Activated CD4-positive, alpha-beta T cell treated with anti-CD3 and anti-CD28 coated beads for 36 hours (primary cell): ENCODE measurements at regions of chr14 and their contacts with region 1.

Region 1: GRCh38 chr14:59189786-59190771 is 1.6 kb downstream of the DAAM1 start:
- DNase-seq: peak; percentile 88
- ATAC-seq: peak; percentile 9
- H3K4me3 Mint-ChIP-seq: peak overlapping the region; percentile 93
- H3K27ac Mint-ChIP-seq: peak overlapping the region; percentile 63
- H3K4me1 Mint-ChIP-seq: peaks cover 13% of the 10 kb centered on the region
- H3K27me3 Mint-ChIP-seq: peaks cover 6% of the 10 kb centered on the region

Region 2: GRCh38 chr14:58571769-58572472 is 618.2 kb before region 1 on chr14:
- CTCF ChIA-PET with region 1: no interaction called
- POLR2A ChIA-PET with region 1: no interaction called
- intact Hi-C with region 1: loop called in 1 of 2 experiments (anchors 5 kb)
- DNase-seq: peak; percentile 83
- ATAC-seq: peak; percentile 90
- H3K4me3 Mint-ChIP-seq: peak overlapping the region; percentile 45
- H3K27ac Mint-ChIP-seq: peak overlapping the region; percentile 93
- H3K4me1 Mint-ChIP-seq: peaks cover 44% of the 10 kb centered on the region
- H3K27me3 Mint-ChIP-seq: no peaks in the 10 kb centered on the region

Region 3: DNA sequence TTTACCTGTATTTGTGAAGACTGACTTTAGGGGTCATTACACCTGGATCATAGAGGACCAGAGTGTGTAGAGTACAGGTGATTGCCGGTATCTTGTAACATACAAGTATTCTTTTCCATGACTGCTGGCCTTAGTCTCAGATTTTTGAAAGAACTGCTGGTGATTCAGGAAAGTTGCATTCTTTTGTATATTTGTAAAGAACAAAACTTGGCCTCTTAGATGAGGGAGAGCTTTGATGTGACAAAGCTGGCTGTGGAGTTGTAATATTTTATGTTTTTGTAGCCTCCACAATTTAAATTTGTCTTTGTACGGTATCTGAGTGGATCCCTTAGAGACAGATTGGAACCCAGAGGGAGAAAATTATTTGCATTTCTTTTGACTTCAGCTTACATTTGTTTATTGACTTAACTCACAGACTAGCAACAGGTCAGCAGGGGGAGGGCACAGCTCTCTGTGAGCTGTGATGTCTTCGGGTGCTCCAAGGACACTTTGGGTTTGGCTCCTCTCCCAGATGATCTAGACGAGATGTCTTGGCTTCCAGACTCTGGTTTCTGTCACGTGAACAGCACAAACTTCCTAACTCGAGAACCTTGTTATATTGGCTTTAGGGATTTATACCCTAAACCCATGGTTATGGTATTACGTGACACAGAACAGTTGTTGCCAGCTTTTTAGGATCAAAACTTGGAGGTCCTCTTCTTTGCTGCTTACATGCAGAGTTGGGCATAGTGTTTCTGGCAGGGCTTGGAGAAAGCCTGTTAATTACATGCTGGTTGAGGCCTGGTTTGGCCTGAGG is 64.3 kb after region 1 on chr14:
- CTCF ChIA-PET with region 1: no interaction called
- POLR2A ChIA-PET with region 1: no interaction called
- intact Hi-C with region 1: no loop called
- DNase-seq: no peak
- ATAC-seq: no peak
- H3K4me3 Mint-ChIP-seq: no peak overlapping the region
- H3K27ac Mint-ChIP-seq: no peak overlapping the region
- H3K4me1 Mint-ChIP-seq: no peaks in the 10 kb centered on the region
- H3K27me3 Mint-ChIP-seq: no peaks in the 10 kb centered on the region

Region 4: GRCh38 chr14:59265808-59266207 is 75.7 kb after region 1 on chr14:
- CTCF ChIA-PET with region 1: no interaction called
- POLR2A ChIA-PET with region 1: no interaction called
- intact Hi-C with region 1: loop called in 1 of 2 experiments (anchors 2 kb)
- DNase-seq: peak; percentile 75
- ATAC-seq: peak; percentile 96
- H3K4me3 Mint-ChIP-seq: no peak overlapping the region
- H3K27ac Mint-ChIP-seq: no peak overlapping the region
- H3K4me1 Mint-ChIP-seq: peaks cover 21% of the 10 kb centered on the region
- H3K27me3 Mint-ChIP-seq: no peaks in the 10 kb centered on the region

Region 5: DNA sequence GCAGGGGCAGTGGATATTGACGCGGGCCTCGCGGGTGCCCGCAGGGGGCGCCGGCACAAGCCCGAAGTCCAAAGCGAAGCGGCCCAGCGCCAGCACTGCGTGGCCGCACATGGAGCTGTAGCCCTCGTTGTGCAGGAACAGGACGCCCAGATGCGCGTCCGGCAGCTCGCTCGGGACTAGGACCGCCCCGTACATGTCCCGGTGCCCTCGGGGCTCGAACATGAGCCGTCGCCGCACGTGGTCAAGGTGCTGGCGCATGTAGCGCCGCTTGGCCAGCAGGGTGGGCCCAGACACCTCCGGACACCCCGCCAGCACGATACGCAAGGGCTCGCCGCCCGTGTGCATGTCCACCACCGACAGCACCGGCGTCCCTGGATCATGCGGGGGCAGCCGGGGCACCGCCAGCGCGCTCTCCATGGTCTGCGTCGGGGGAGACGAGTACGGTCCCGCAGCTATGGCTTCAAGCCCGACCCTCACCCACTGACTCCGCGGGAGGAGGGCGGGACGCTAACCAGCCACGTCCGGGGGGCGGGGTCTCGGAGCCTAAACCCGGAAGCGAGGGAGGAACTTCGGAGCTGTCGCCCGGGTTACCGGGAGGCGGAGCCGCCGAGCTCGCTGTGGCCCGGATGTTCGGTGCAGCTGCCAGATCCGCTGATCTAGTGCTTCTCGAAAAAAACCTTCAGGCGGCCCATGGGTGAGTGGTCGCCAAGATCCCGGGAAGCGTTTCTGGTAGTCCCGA is 294.0 kb after region 1 on chr14 and contains the starts of genes JKAMP and L3HYPDH:
- CTCF ChIA-PET with region 1: interaction called, 3 read pairs
- POLR2A ChIA-PET with region 1: interaction called, 5 read pairs
- intact Hi-C with region 1: loop called (anchors 1 kb)
- DNase-seq: peak; percentile 99
- ATAC-seq: peak; percentile 97
- H3K4me3 Mint-ChIP-seq: peak within 1 kb of the TSS; percentile 92
- H3K27ac Mint-ChIP-seq: peak within 1 kb of the TSS; percentile 89
- H3K4me1 Mint-ChIP-seq: peaks cover 57% of the 10 kb centered on the region
- H3K27me3 Mint-ChIP-seq: no peaks in the 10 kb centered on the region
- total RNA-seq, gene JKAMP: 18.0 to 20.2 TPM
- total RNA-seq, gene L3HYPDH: 9.3 to 11.8 TPM

Region 6: DNA sequence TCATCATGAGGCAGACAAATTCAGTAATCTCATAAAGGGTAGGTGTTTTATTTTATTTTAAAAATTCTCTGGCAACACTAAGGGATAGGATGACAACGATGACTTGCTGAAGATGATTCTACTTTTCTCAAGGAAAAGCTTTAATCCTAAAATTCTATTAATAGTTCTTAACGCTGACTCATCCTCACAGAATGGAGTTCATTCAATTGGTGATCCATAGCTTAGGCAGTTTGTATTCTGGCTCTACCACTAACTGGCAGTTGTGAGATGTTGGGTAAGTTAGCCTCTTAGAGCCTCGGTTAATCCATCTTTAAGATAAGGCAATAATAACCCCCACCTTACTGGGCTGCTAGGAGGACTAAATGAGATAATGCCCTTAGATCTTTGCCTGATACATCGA is 564.2 kb after region 1 on chr14:
- CTCF ChIA-PET with region 1: no interaction called
- POLR2A ChIA-PET with region 1: no interaction called
- intact Hi-C with region 1: no loop called
- DNase-seq: no peak
- ATAC-seq: no peak
- H3K4me3 Mint-ChIP-seq: no peak overlapping the region
- H3K27ac Mint-ChIP-seq: no peak overlapping the region
- H3K4me1 Mint-ChIP-seq: no peaks in the 10 kb centered on the region
- H3K27me3 Mint-ChIP-seq: peaks cover 8% of the 10 kb centered on the region

Region 7: DNA sequence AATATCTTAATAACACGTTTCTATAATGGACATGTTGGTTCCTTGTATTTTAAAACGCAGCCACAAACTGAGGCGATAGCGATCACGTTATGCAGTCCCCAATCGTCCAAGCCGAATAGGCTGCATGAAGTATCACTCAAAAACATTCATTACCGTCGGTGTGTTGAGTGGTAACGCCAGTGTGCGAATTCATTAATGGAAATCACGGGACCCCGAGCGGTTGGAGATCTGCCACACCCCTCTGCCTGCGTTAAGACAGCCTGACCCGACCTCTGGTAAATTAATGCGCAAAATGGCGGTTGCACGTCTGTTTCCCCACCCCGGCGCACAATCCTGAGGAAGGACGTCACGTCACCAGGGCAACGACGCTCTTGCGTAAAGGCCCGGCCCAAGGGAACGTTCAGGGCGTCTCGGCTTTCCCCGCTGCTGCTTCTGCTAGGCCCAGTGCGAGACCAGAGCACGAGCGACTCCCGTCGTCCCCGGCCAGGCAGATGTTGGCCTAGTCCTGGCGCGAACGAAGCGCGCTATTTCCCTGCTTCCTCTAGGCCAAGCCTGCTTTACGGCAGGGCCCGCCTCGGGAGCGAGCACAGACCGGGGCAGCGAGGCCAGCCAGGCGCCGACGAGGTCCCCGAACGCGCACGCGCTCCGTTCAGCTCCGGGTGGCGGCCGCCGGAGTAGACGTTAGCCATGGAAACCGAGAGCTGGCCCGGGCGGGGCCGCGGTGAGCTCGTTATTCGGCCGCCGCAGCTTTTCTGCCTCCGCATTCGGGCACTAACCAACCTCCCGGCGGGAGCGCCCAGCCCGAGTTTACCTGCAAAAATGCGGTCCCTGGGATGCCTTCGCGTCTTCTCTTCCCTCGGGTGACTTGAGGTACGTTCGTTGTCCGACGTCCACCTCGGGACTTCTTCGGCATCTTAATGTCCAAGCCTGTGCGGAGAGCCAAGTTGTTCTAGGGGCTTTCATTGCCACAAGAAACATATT is 901.8 kb after region 1 on chr14 and contains the start of gene PCNX4:
- CTCF ChIA-PET with region 1: no interaction called
- POLR2A ChIA-PET with region 1: no interaction called
- intact Hi-C with region 1: loop called in 1 of 2 experiments (anchors 2 kb)
- DNase-seq: peak; percentile 96
- ATAC-seq: peak; percentile 96
- H3K4me3 Mint-ChIP-seq: peak within 1 kb of the TSS; percentile 91
- H3K27ac Mint-ChIP-seq: peak within 1 kb of the TSS; percentile 92
- H3K4me1 Mint-ChIP-seq: peaks cover 34% of the 10 kb centered on the region
- H3K27me3 Mint-ChIP-seq: no peaks in the 10 kb centered on the region
- total RNA-seq, gene PCNX4: 27.0 to 27.6 TPM